K562 (cell line): ENCODE measurements at regions of chr2 and their contacts with region 1.

Region 1: GRCh38 chr2:170895023-170895757 is 33.9 kb upstream of the GORASP2 start:
- DNase-seq: no peak
- ATAC-seq: no peak
- H3K4me3 ChIP-seq: no peak overlapping the region
- H3K27ac ChIP-seq: no peak overlapping the region
- H3K4me1 ChIP-seq: no peaks in the 10 kb centered on the region
- H3K27me3 ChIP-seq: peaks cover 15 to 23% of the 10 kb centered on the region in 2 experiments; a peak in 4 of 5 replicates
- CTCF ChIP-seq: no peak
- EP300 ChIP-seq: no peak
- POLR2A ChIP-seq: no peak
- RAD21 ChIP-seq: no peak

Region 2: GRCh38 chr2:170881840-170882239 is 13.3 kb before region 1 on chr2:
- CTCF ChIA-PET with region 1: no interaction called
- POLR2A ChIA-PET with region 1: interaction called, 6 read pairs
- in situ Hi-C with region 1: no loop called
- intact Hi-C with region 1: loop called (anchors 1 kb)
- DNase-seq: no peak
- ATAC-seq: no peak
- H3K4me3 ChIP-seq: no peak overlapping the region
- H3K27ac ChIP-seq: no peak overlapping the region
- H3K4me1 ChIP-seq: no peaks in the 10 kb centered on the region
- H3K27me3 ChIP-seq: peaks cover 32 to 41% of the 10 kb centered on the region in 2 experiments; a peak in 4 of 5 replicates
- CTCF ChIP-seq: no peak
- EP300 ChIP-seq: no peak
- POLR2A ChIP-seq: no peak
- RAD21 ChIP-seq: no peak